ENCODE measurements at regions of chr16 and their contacts with region 1.

Region 1: DNA sequence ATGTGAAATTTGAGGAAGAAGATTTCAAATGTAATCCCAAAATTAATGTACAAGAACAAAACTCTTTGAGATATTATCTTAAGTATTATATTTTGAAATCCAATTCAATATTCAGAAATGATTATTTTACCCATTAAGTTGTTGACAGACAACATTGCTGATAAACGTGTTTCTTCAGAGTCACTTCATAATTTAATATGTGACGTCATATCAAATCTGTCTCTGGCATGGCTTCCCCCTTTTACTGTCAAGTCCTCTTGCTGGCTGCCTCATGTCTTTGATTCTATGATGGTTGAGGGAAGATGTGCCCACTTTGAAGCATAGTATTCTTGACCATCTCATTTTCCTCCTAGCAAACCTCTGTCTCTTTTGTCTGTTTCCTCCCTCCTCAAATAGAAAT is 1257.1 kb upstream of the GOT2 start:
- H3K4me3 Mint-ChIP-seq: no peak overlapping the region
- H3K27ac Mint-ChIP-seq: no peak overlapping the region
- H3K4me1 Mint-ChIP-seq: no peaks in the 10 kb centered on the region
- H3K27me3 Mint-ChIP-seq: no peaks in the 10 kb centered on the region

Region 2: DNA sequence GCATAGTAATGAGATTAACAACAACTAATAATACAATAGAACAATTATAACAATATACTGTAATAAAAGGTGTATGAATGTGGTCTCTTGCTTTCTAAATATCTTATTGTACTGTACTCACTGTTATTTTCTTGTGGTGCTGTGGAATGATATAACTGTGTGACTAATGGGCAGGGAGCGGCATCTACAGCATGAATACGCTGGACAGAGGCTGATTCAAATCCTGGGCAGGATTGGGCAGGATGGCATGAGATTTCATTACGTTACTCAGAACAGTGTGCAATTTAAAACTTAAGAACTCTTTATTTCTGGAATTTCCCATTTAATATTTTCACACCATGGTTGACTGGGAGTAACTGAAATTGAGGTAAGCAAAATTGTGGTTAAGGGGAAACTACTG is 17.2 kb before region 1 on chr16:
- intact Hi-C with region 1: loop called (anchors 1 kb)
- H3K4me3 Mint-ChIP-seq: no peak overlapping the region
- H3K27ac Mint-ChIP-seq: no peak overlapping the region
- H3K4me1 Mint-ChIP-seq: no peaks in the 10 kb centered on the region
- H3K27me3 Mint-ChIP-seq: no peaks in the 10 kb centered on the region

Region 3: DNA sequence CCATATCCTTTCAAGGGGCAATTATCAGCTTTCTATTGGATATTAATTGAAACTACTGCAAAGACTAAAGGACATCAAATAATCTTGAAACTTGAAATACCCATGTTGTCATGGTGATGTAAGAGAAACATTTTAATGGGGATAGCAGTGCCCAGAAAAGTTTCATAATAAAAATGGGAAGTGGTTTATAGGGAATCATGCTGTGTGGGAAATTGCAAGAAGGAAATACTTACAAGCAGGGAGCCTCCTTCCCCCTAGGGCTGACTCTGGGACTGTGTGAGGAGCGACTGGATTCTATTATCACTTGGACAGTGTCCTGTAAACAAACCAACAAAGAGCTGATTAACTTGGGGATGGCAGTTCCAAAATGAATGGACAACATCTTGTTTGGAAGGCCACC is 136.0 kb after region 1 on chr16:
- intact Hi-C with region 1: no loop called
- H3K4me3 Mint-ChIP-seq: no peak overlapping the region
- H3K27ac Mint-ChIP-seq: no peak overlapping the region
- H3K4me1 Mint-ChIP-seq: no peaks in the 10 kb centered on the region
- H3K27me3 Mint-ChIP-seq: no peaks in the 10 kb centered on the region